Gastrocnemius medialis (tissue), 4 donors: ENCODE measurements at regions of chr3 and their contacts with region 1.

Region 1: GRCh38 chr3:196988241-196989029 is 19.8 kb upstream of the PIGZ start:
- DNase-seq: no peak
- ATAC-seq: no peak
- H3K4me3 ChIP-seq: no peak overlapping the region
- H3K27ac ChIP-seq: no peak overlapping the region
- H3K4me1 ChIP-seq: no peaks in the 10 kb centered on the region
- H3K27me3 ChIP-seq: no peaks in the 10 kb centered on the region
- CTCF ChIP-seq: no peak
- POLR2A ChIP-seq: no peak

Region 2: DNA sequence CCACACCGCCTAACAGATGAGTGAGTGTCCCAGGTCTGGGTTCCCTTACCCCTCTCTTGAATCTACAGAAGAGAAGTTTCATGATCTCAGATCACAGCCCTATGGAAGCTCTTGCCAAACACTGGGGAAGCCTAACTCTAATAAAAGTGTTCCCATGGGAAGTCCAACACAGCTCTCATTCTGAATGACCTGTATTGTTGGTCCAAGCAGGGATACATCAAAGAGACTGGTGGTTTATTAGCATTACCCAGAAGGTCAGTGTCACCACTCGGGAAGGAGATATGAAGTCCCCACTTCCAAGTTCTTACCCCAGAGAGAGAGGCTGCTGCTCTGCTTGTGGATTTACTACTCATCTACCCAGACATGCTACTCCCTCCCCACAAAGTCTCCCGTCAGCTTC is 37.1 kb before region 1 on chr3:
- in situ Hi-C with region 1: no loop called
- intact Hi-C with region 1: no loop called
- DNase-seq: no peak
- ATAC-seq: no peak
- H3K4me3 ChIP-seq: no peak overlapping the region
- H3K27ac ChIP-seq: no peak overlapping the region
- H3K4me1 ChIP-seq: no peaks in the 10 kb centered on the region
- H3K27me3 ChIP-seq: no peaks in the 10 kb centered on the region
- CTCF ChIP-seq: no peak
- POLR2A ChIP-seq: no peak

Region 3: GRCh38 chr3:197010556-197011351 is 22.3 kb after region 1 on chr3:
- in situ Hi-C with region 1: no loop called
- intact Hi-C with region 1: no loop called
- DNase-seq: no peak
- ATAC-seq: no peak
- H3K4me3 ChIP-seq: no peak overlapping the region
- H3K27ac ChIP-seq: no peak overlapping the region
- H3K4me1 ChIP-seq: no peaks in the 10 kb centered on the region
- H3K27me3 ChIP-seq: no peaks in the 10 kb centered on the region
- CTCF ChIP-seq: no peak
- POLR2A ChIP-seq: no peak

Region 4: DNA sequence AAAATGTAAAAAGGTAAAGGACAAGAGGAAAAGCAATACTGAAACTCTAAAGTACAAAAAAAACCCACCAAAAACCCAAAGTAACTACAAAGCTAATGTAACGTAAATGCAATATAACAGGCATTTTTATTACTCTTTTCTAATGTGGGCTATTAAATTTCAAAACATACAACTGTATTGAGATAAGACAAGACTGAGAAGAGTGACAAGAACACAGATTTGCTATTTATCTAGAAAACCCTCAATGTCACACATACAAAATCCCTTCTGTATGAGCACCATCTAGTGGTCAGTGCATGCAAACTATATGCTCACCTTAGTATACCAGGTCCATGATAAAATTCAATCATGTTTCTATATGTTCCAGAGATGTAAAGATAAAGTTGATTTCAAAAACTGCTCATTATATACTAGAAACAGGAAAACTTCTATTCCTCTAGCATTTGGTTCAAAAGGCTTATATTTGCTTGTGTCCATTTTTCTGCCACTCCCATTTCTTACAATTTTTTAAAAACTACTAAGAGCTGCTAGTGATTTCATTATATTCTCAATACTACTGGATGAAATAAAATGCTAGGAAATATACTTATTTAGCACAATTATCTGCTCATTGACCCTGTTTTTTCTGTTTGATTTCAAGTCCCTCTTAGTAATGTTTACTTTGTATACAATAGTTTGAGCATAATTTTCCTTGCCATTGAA is 198.6 kb after region 1 on chr3:
- in situ Hi-C with region 1: loop called in 1 of 4 experiments (anchors 25 kb)
- intact Hi-C with region 1: no loop called
- DNase-seq: no peak
- ATAC-seq: peak; percentile 53 to 59
- H3K4me3 ChIP-seq: no peak overlapping the region
- H3K27ac ChIP-seq: no peak overlapping the region
- H3K4me1 ChIP-seq: peaks cover 18 to 23% of the 10 kb centered on the region in 2 donors
- H3K27me3 ChIP-seq: no peaks in the 10 kb centered on the region
- CTCF ChIP-seq: peak; percentile 48 to 80 (median 75)
- POLR2A ChIP-seq: no peak

Region 5: GRCh38 chr3:197501879-197502620 is 513.6 kb after region 1 on chr3:
- in situ Hi-C with region 1: loop called in 2 of 4 experiments (anchors 25 kb)
- intact Hi-C with region 1: no loop called
- DNase-seq: no peak
- ATAC-seq: no peak
- H3K4me3 ChIP-seq: no peak overlapping the region
- H3K27ac ChIP-seq: no peak overlapping the region
- H3K4me1 ChIP-seq: no peaks in the 10 kb centered on the region
- H3K27me3 ChIP-seq: no peaks in the 10 kb centered on the region
- CTCF ChIP-seq: peak in 2 of 5 experiments; percentile 26 to 29
- POLR2A ChIP-seq: no peak